Activated CD4-positive, alpha-beta T cell treated with anti-CD3 and anti-CD28 coated beads for 36 hours (primary cell): ENCODE measurements at regions of chr10 and their contacts with region 1.

Region 1: DNA sequence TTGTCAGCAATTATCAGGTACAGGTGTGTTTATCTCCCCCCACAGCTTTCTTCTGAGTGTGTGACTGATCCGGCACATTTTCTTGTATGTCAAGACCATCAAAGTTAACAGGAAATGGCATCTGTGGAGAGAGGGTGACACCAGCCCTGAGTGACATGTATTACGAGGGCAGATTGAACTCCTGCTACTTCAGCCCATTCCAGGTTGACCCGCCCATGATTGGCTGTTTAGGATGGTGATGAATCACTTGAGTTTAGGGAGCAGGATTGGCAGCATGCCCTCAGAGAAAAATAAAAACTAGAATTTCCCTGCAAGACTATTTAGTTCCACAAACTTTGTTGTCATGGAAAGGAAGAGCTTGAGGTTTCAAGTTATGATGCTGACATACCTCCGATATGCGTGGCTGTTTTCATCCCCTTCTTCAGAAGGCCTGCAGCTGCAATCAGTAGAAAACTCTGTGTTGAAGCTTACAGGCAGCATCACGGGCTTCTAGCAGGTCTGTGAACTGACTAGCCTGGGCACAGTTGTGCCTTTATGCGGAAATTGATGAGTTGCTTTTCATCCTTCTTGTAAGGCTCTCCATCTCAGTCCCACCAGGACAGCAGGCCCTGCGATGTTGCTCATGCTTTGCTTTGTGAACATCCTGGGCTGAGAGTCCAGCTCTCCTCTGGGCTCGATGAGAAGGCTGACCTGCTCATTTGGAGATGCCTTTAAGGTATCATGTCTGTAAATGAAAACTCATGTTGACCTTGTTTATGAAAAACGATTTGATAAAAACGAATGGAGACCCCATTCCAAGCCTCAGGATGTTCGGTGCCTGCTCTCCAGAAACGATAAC is 8.0 kb upstream of the CELF2 start:
- DNase-seq: peak; percentile 52
- ATAC-seq: peak; percentile 77
- H3K4me3 Mint-ChIP-seq: no peak overlapping the region
- H3K27ac Mint-ChIP-seq: peak overlapping the region; percentile 43
- H3K4me1 Mint-ChIP-seq: peaks cover 38% of the 10 kb centered on the region
- H3K27me3 Mint-ChIP-seq: peaks cover 50% of the 10 kb centered on the region

Region 2: GRCh38 chr10:10977978-10978377 is 31.7 kb before region 1 on chr10:
- CTCF ChIA-PET with region 1: no interaction called
- POLR2A ChIA-PET with region 1: no interaction called
- intact Hi-C with region 1: loop called in 1 of 2 experiments (anchors 2 kb)
- DNase-seq: no peak
- ATAC-seq: peak; percentile 46
- H3K4me3 Mint-ChIP-seq: no peak overlapping the region
- H3K27ac Mint-ChIP-seq: no peak overlapping the region
- H3K4me1 Mint-ChIP-seq: peaks cover 33% of the 10 kb centered on the region
- H3K27me3 Mint-ChIP-seq: peaks cover 14% of the 10 kb centered on the region

Region 3: DNA sequence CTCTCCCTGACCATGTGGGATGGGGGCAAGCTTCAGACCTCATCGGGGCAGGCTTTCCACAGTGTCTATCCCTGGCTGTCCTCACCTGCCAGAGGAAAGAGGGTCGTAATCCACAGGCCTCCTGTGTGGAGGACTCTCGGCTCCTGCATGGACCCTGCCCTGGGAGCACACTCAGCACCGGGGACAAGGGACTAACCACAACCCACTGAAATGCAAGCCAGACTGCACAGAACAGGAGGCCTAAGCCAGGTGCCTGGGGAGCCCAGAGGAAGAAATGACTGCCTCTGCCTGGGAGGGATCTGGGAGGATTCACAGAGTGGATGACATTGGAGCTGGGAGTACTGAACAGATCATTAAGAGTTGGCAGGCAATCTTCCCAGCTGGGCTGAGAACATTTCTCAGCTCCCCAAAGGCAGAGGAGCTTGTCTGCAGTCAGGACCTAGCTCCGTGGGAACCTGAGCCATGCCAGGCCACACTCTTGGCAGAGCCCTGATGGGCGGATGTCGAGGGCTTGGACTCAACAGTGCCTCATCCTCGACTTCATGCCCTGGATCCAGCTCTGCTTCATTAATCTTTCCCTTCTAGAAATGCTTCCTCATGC is 388.4 kb after region 1 on chr10:
- CTCF ChIA-PET with region 1: no interaction called
- POLR2A ChIA-PET with region 1: no interaction called
- intact Hi-C with region 1: no loop called
- DNase-seq: no peak
- ATAC-seq: no peak
- H3K4me3 Mint-ChIP-seq: no peak overlapping the region
- H3K27ac Mint-ChIP-seq: no peak overlapping the region
- H3K4me1 Mint-ChIP-seq: peaks cover 31% of the 10 kb centered on the region
- H3K27me3 Mint-ChIP-seq: no peaks in the 10 kb centered on the region